ENCODE measurements at regions of chr10 and their contacts with region 1.

Region 1: GRCh38 chr10:69861251-69862240 is 59.8 kb downstream of the COL13A1 start:
- DNase-seq: no peak
- H3K4me3 ChIP-seq: no peak overlapping the region
- H3K27ac ChIP-seq: no peak overlapping the region; the same call in 1 of the 2 replicates
- H3K4me1 ChIP-seq: peaks cover 0 to 35% (median 19%) of the 10 kb centered on the region in 4 experiments; a peak in 6 of 7 replicates
- H3K27me3 ChIP-seq: no peaks in the 10 kb centered on the region; a peak in 1 of 7 replicates
- CTCF ChIP-seq: peak in 2 of 3 experiments; percentile 51 to 58; a peak in 2 of 4 replicates
- EP300 ChIP-seq: no peak
- POLR2A ChIP-seq: no peak
- RAD21 ChIP-seq: peak; percentile 30 to 58; a peak in 3 of 4 replicates

Region 2: GRCh38 chr10:69678005-69678654 is 183.4 kb before region 1 on chr10:
- CTCF ChIA-PET with region 1: no interaction called
- POLR2A ChIA-PET with region 1: no interaction called
- DNase-seq: no peak
- H3K4me3 ChIP-seq: no peak overlapping the region
- H3K27ac ChIP-seq: no peak overlapping the region
- H3K4me1 ChIP-seq: peaks cover 0 to 4% (median 0%) of the 10 kb centered on the region in 4 experiments; a peak in 1 of 7 replicates
- H3K27me3 ChIP-seq: no peaks in the 10 kb centered on the region
- CTCF ChIP-seq: no peak
- EP300 ChIP-seq: no peak
- POLR2A ChIP-seq: no peak
- RAD21 ChIP-seq: no peak

Region 3: DNA sequence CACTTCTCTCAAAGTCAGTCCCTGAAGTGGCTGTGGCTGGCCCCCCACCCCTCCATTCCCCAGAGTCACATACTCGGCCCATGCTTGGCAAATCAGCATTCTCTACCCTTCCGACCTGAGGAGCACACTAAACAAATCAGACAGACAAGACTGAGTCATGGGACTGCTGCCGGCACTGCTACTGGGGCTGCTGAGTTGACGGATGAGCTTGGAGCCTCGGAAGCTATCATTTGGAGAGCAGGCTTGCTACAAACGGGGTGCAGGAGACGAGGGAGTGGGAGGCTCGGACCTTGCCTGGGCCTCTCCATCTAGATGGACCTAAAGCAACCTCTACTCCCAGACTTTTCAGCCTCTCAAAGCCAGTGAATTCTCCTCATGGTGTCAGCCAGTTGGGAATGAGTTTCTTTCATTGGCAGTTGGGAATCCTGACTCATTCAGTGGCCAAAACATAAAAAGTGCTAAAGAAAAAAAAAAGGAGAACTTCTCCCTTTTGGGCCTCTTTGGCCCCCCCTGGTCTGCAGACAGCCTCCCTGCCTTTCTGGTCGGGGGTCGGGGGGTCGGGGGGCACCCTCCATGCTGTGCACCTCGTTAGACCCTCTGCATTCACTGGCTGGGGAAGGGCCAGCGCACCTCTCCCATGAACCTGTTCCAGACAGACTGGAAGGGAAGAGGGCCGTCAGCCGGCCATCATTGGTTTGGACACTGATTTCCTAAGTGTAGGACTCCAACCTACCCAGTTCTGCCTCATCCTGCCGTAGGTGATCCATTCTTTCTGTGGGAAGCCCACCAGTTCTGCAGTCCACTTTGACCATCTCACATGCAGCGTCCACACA is 112.2 kb before region 1 on chr10:
- CTCF ChIA-PET with region 1: no interaction called
- POLR2A ChIA-PET with region 1: no interaction called
- DNase-seq: no peak
- H3K4me3 ChIP-seq: no peak overlapping the region
- H3K27ac ChIP-seq: no peak overlapping the region
- H3K4me1 ChIP-seq: peaks cover 0 to 4% (median under 1%) of the 10 kb centered on the region in 4 experiments; a peak in 2 of 7 replicates
- H3K27me3 ChIP-seq: peaks cover 0 to 7% (median 2%) of the 10 kb centered on the region in 4 experiments; a peak in 3 of 7 replicates
- CTCF ChIP-seq: no peak
- EP300 ChIP-seq: no peak
- POLR2A ChIP-seq: no peak
- RAD21 ChIP-seq: no peak

Region 4: DNA sequence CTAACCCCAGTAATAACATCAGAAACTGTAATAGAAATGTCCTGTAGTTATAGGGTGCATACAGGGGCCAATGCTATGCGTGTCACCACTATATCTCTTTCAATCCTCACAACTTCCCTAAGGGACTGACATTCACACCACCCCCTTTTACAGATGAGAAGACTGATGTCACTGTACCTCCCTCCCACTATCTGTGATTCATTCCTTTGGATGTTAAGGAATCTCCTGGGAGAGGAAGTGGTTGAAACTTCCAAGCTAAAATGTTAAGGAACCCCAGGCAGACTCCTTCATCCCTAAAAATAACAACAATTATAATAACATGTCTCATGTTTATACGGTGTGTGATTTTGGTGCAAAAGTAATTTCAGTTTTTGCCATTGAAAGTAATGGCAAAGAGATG is 54.4 kb before region 1 on chr10:
- CTCF ChIA-PET with region 1: interaction called, 13 read pairs
- POLR2A ChIA-PET with region 1: no interaction called
- DNase-seq: no peak
- H3K4me3 ChIP-seq: no peak overlapping the region
- H3K27ac ChIP-seq: no peak overlapping the region
- H3K4me1 ChIP-seq: peaks cover 0 to 16% (median 9%) of the 10 kb centered on the region in 4 experiments; a peak in 5 of 7 replicates
- H3K27me3 ChIP-seq: peaks cover 10 to 25% (median 20%) of the 10 kb centered on the region in 4 experiments; a peak in 6 of 7 replicates
- CTCF ChIP-seq: no peak
- EP300 ChIP-seq: no peak
- POLR2A ChIP-seq: no peak
- RAD21 ChIP-seq: no peak

Region 5: GRCh38 chr10:69831231-69831855 is 30.2 kb before region 1 on chr10:
- CTCF ChIA-PET with region 1: interaction called, 128 read pairs
- POLR2A ChIA-PET with region 1: no interaction called
- DNase-seq: no peak
- H3K4me3 ChIP-seq: no peak overlapping the region
- H3K27ac ChIP-seq: no peak overlapping the region
- H3K4me1 ChIP-seq: peaks cover 2 to 19% (median 10%) of the 10 kb centered on the region in 4 experiments; a peak in 5 of 7 replicates
- H3K27me3 ChIP-seq: no peaks in the 10 kb centered on the region
- CTCF ChIP-seq: no peak
- EP300 ChIP-seq: no peak
- POLR2A ChIP-seq: no peak
- RAD21 ChIP-seq: no peak

Region 6: GRCh38 chr10:69845574-69846292 is 15.8 kb before region 1 on chr10:
- CTCF ChIA-PET with region 1: interaction called, 128 read pairs
- POLR2A ChIA-PET with region 1: no interaction called
- DNase-seq: no peak
- H3K4me3 ChIP-seq: 0 out of 8 replicates have a peak overlapping the region, but pooled peaks of 1 of the 4 experiments have one; percentile 2
- H3K27ac ChIP-seq: no peak overlapping the region
- H3K4me1 ChIP-seq: peaks cover 11 to 43% (median 25%) of the 10 kb centered on the region in 4 experiments
- H3K27me3 ChIP-seq: no peaks in the 10 kb centered on the region
- CTCF ChIP-seq: no peak
- EP300 ChIP-seq: no peak
- POLR2A ChIP-seq: no peak
- RAD21 ChIP-seq: no peak

Region 7: GRCh38 chr10:69878038-69878437 is 16.5 kb after region 1 on chr10:
- CTCF ChIA-PET with region 1: interaction called, 68 read pairs
- POLR2A ChIA-PET with region 1: interaction called, 3 read pairs
- DNase-seq: no peak
- H3K4me3 ChIP-seq: no peak overlapping the region
- H3K27ac ChIP-seq: no peak overlapping the region
- H3K4me1 ChIP-seq: peaks cover 9 to 41% (median 27%) of the 10 kb centered on the region in 4 experiments
- H3K27me3 ChIP-seq: no peaks in the 10 kb centered on the region; a peak in 3 of 7 replicates
- CTCF ChIP-seq: no peak
- EP300 ChIP-seq: no peak
- POLR2A ChIP-seq: no peak
- RAD21 ChIP-seq: no peak

Region 8: DNA sequence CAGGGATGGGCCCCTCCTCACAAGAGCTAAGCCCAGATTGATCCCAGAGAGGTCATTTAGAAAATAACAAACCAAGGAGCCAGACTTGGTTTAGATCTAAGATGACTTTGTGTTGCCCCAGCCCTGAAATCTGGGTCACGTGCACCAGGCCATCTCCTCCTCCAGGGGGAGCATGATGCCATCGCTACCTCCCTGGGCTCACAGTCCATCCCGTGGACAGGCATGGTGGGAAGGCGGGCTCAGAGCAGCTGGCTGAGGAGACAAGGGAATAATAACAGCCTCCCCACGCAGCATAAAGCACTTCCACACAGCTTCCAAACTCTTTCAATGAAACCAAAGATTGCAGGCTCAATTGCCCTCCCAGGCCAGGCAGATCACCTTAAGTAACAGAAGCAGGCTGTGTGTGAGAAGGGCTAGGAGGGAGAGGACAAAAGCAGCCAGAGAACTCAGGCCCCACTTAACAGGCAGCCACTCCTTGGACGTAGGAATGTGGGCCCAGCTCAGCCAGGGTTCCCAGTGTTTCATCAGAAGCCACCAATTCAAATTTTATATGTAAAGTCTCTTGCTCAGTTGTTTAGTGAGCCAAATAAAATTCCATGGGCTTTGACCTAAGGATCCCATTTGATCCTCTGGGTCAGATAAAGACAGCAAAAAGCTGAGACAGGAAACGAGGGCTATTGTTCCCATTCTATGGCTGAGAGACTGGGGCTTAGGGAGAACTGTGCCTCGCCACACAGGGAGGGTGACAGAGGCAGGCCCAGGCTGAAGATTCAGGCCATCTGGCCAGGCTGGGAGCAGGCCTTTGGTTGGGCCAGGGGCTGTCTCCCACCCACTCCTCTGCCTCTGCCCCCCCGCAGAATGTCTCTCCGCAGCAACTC is 40.3 kb after region 1 on chr10:
- CTCF ChIA-PET with region 1: interaction called, 31 read pairs
- POLR2A ChIA-PET with region 1: interaction called, 3 read pairs
- DNase-seq: peak; percentile 31 to 71
- H3K4me3 ChIP-seq: no peak overlapping the region
- H3K27ac ChIP-seq: no peak overlapping the region
- H3K4me1 ChIP-seq: peaks cover 0 to 15% (median 7%) of the 10 kb centered on the region in 4 experiments; a peak in 3 of 7 replicates
- H3K27me3 ChIP-seq: no peaks in the 10 kb centered on the region
- CTCF ChIP-seq: peak; percentile 72 to 96 (median 89)
- EP300 ChIP-seq: no peak
- POLR2A ChIP-seq: no peak
- RAD21 ChIP-seq: peak; percentile 52 to 73

Region 9: DNA sequence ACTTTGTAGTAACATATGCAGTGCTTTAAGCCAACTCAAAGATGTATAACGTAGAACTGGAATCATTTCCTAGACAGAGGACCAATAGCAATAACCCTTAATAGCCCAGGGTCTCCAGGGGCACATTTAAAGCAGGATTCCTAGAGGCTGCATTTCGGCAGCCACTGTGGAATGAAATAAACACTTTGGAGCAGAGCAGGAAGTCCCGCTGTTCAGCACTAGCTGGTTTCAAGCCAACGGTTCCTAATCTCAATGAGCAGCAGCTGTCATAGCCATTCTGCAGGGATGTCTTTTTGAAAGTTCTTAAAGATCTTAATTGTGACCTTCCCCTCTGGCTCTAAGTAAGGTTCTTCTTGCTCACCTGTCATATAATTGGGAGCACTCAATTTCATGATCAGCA is 172.7 kb after region 1 on chr10:
- CTCF ChIA-PET with region 1: no interaction called
- POLR2A ChIA-PET with region 1: no interaction called
- DNase-seq: no peak
- H3K4me3 ChIP-seq: no peak overlapping the region
- H3K27ac ChIP-seq: no peak overlapping the region
- H3K4me1 ChIP-seq: no peaks in the 10 kb centered on the region
- H3K27me3 ChIP-seq: no peaks in the 10 kb centered on the region; a peak in 2 of 7 replicates
- CTCF ChIP-seq: no peak
- EP300 ChIP-seq: no peak
- POLR2A ChIP-seq: no peak
- RAD21 ChIP-seq: no peak